CD8-positive, alpha-beta T cell (primary cell): ENCODE measurements at regions of chr9 and their contacts with region 1.

Region 1: DNA sequence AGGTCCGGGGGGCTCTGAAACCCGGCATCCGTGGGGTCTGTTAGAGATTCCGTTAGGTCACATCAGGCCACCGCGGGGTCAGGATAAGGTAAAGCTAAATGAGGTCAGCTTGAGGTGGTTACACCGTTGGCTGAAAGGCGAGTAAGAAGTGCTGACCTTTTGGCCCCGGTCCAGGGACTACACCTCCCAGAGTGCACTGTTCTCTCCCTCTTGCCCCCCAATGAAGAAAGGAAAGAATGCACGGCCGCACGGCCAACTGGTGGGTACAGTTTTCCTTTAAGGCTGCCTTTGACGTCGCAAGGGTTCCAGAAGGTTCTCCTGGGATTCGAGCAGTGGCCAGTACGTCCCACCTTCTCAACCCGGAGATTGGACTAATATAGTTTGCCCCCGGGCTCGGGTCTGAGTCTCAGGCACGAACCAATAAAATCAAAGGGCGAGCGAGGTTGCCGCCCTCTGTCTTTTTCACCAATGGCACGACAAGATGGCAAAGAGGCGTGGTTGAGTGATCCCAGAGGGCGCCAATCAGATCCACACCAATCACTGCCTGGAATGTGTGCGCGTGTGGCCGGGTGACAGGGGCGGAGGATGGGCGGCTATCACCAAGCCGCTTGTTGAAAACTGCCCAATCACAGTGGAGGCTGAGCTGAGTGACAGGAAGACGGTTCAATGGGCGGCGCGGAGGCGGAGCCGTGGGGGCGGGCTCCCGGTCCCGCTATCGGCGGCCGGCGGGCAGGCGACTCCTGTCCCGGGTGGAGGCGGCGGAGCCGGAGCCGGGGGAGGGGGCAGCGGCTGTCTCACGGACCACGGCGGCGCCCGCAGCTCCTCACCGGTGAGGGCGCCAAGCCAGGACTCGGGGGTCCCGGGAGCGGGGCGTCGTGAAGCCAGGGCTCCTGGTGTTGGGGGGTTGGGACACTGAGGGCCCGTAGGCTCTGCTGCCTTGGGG is at the start of gene DNAJB5:
- DNase-seq: peak; percentile 94 to 99 (median 96)
- ATAC-seq: peak; percentile 89
- H3K4me3 ChIP-seq: peak within 1 kb of the TSS; percentile 88 to 95
- H3K4me3 Mint-ChIP-seq: peak within 1 kb of the TSS; percentile 93
- H3K27ac ChIP-seq: peak within 1 kb of the TSS; percentile 42 to 77
- H3K27ac Mint-ChIP-seq: peak within 1 kb of the TSS; percentile 76
- H3K4me1 ChIP-seq: peaks cover 42% of the 10 kb centered on the region
- H3K4me1 Mint-ChIP-seq: peaks cover 46% of the 10 kb centered on the region
- H3K27me3 ChIP-seq: no peaks in the 10 kb centered on the region
- H3K27me3 Mint-ChIP-seq: no peaks in the 10 kb centered on the region
- CTCF ChIP-seq: no peak
- total RNA-seq, gene DNAJB5: 2.1 to 2.2 TPM

Region 2: DNA sequence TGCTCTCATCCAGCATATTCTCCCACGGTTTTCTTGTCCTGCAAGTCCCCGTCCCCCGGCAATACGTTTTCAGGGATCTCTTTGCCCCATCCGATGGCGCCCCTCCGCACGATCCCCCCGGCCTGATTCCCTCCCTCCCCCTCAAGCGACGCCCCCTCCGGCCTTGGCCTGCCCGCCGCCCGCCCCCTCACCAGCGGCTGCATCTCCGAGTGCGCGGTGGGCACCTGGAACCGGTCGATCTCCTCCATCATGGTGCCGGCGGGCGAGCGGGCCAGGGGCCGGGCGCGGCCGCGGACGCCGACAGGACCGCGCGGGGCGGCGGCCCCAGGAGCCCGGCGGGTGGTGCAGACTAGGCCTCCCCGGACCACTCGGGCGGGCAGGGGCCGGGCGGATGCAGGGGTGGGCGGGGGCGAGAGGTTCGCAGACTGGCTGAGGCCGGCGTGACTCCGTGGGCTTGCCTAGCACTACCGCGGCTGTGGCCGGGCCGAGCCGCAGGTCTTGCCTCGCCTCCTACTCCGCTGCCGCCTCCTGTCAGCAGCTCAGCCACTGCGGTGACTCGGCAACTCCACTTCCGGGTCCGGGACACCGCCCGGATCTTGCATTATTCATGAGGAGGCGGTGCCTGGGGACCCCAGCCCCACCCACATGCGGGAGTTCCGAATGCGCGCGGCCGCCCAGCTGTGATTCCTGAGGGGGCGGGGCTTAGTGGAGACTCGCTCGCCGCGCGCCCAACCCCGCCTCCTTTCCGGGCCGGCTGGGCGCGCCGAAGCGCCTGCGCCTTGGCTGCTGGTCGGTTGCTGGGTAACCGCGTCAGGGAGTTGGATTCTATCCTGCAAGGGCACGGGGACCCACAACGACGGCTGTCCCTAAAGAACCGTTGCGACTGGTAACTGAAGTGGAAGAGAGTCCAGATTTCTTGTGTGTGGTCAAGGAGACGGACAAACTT is 531.0 kb before region 1 on chr9 and contains the starts of genes DNAI1 and FAM219A:
- CTCF ChIA-PET with region 1: no interaction called
- POLR2A ChIA-PET with region 1: no interaction called
- intact Hi-C with region 1: loop called in 1 of 2 experiments (anchors 5 kb)
- DNase-seq: peak; percentile 98 to 99 (median 99)
- ATAC-seq: peak; percentile 96
- H3K4me3 ChIP-seq: peak within 1 kb of the TSS; percentile 61 to 67
- H3K4me3 Mint-ChIP-seq: peak within 1 kb of the TSS; percentile 91
- H3K27ac ChIP-seq: peak within 1 kb of the TSS in 1 of 2 experiments; percentile 29
- H3K27ac Mint-ChIP-seq: peak within 1 kb of the TSS; percentile 46
- H3K4me1 ChIP-seq: peaks cover 14% of the 10 kb centered on the region
- H3K4me1 Mint-ChIP-seq: peaks cover 30% of the 10 kb centered on the region
- H3K27me3 ChIP-seq: no peaks in the 10 kb centered on the region
- H3K27me3 Mint-ChIP-seq: no peaks in the 10 kb centered on the region
- CTCF ChIP-seq: no peak
- total RNA-seq, gene DNAI1: not detected
- total RNA-seq, gene FAM219A: 5.5 to 5.9 TPM

Region 3: DNA sequence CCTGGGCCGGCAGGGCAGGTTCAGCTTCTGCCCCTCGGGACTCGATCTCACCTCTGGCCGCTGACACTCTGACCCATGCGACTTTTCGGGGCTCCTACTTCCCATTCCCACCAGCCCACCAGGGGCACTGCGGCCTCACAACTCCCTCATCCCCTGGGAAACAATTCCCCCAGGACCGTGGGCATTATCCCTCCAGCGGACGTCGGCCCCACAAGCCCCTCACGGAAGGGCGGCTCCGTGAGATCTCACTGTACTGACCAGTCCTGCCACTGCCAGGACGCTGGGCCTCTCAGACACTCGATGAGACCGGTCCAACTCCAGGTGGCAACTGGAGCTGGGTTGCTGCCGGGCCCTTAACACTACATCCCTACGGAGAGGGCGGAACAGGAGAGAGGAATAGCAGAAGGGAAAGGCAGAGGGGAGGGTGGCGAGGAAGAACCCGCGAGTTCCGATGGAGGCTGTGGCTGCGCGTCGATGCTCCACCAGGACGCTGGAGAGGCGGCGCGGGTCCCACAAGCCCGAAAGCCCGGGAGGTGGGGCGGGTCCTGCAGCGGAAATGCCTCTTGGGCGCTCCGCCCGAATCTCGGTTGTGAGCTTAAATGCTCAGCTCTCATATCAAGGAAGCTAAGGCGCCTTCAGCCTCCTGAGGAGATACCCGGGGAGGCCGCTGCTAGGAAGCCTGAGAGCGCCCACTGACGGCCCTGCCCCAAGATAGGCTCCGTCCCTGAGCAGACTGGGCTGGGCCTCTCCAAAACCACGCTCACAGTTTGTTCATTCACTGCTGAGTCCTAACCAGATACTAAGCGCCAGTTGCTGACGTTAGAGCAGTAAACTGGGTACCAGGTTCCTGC is 46.8 kb after region 1 on chr9:
- CTCF ChIA-PET with region 1: interaction called, 3 read pairs
- POLR2A ChIA-PET with region 1: no interaction called
- intact Hi-C with region 1: loop called in 1 of 2 experiments (anchors 5 kb)
- DNase-seq: peak in 8 of 9 experiments; percentile 6 to 58 (median 38)
- ATAC-seq: peak; percentile 81
- H3K4me3 ChIP-seq: peak overlapping the region in 1 of 2 experiments; percentile 28
- H3K4me3 Mint-ChIP-seq: peak overlapping the region; percentile 50
- H3K27ac ChIP-seq: no peak overlapping the region
- H3K27ac Mint-ChIP-seq: no peak overlapping the region
- H3K4me1 ChIP-seq: peaks cover 5% of the 10 kb centered on the region
- H3K4me1 Mint-ChIP-seq: peaks cover 4% of the 10 kb centered on the region
- H3K27me3 ChIP-seq: no peaks in the 10 kb centered on the region
- H3K27me3 Mint-ChIP-seq: no peaks in the 10 kb centered on the region
- CTCF ChIP-seq: no peak

Region 4: GRCh38 chr9:35071814-35072460 is 82.7 kb after region 1 on chr9:
- CTCF ChIA-PET with region 1: no interaction called
- POLR2A ChIA-PET with region 1: interaction called, 5 read pairs
- intact Hi-C with region 1: loop called (anchors 1 kb)
- DNase-seq: peak; percentile 40 to 87 (median 73)
- ATAC-seq: peak; percentile 49
- H3K4me3 ChIP-seq: peak overlapping the region; percentile 82 to 93
- H3K4me3 Mint-ChIP-seq: peak overlapping the region; percentile 93
- H3K27ac ChIP-seq: peak overlapping the region; percentile 91 to 94
- H3K27ac Mint-ChIP-seq: peak overlapping the region; percentile 97
- H3K4me1 ChIP-seq: peaks cover 49% of the 10 kb centered on the region
- H3K4me1 Mint-ChIP-seq: peaks cover 49% of the 10 kb centered on the region
- H3K27me3 ChIP-seq: no peaks in the 10 kb centered on the region
- H3K27me3 Mint-ChIP-seq: no peaks in the 10 kb centered on the region
- CTCF ChIP-seq: peak; percentile 43

Region 5: GRCh38 chr9:35096035-35096849 is 107.0 kb after region 1 on chr9 and contains the start of gene PIGO:
- CTCF ChIA-PET with region 1: interaction called, 5 read pairs
- POLR2A ChIA-PET with region 1: no interaction called
- intact Hi-C with region 1: loop called in 1 of 2 experiments (anchors 2 kb)
- DNase-seq: peak; percentile 78 to 94 (median 89)
- ATAC-seq: peak; percentile 90
- H3K4me3 ChIP-seq: peak within 1 kb of the TSS; percentile 95 to 99
- H3K4me3 Mint-ChIP-seq: peak within 1 kb of the TSS; percentile 88
- H3K27ac ChIP-seq: peak within 1 kb of the TSS; percentile 95 to 100
- H3K27ac Mint-ChIP-seq: peak within 1 kb of the TSS; percentile 95
- H3K4me1 ChIP-seq: peaks cover 24% of the 10 kb centered on the region
- H3K4me1 Mint-ChIP-seq: peaks cover 32% of the 10 kb centered on the region
- H3K27me3 ChIP-seq: no peaks in the 10 kb centered on the region
- H3K27me3 Mint-ChIP-seq: no peaks in the 10 kb centered on the region
- CTCF ChIP-seq: peak; percentile 75
- total RNA-seq, gene PIGO: 15.1 to 16.4 TPM

Region 6: DNA sequence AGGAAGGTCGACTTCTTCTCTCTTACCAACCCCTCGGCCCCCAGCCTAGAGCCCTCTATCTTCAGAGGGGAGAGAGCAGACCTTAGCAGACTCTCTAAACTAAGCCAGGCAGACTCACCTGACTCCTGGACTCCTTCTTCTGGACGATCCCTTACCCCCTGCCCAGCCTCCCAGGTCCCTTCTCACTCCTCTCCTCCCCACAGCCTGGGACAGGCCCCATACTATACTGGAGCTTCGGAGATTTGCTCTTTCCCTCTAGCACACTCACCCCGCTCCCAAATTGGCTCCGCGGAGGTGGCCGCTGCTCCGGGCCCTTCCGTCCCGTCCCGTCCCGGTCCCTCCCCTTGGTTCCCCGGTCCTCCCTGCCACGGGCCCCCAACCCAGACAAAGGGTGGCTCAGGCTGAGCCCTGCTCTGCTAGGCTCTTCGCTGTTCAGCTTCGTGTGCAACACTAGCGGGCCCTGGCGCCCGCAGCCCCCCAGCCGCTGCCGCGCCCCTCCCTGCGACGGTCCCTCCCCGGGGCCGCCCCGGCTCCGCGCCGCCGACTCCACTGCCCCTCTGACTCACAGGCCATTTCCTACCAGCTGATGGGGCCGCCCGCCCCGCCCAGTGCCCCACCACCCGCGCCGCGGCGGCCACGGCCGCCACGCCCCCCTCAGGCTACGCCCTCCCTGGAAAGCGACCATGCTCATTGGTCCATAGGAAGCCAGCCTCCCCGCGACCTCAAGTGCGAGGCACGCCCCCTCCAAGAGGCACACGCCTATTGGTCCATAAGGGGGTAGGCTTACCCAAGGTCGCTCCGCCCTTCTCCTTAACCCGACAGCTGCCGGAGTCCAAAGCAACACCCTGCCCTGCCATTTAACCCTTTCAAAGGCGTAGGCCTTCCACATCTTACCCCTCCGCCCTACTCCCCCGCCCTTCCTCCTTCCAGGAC is 122.0 kb after region 1 on chr9:
- CTCF ChIA-PET with region 1: no interaction called
- POLR2A ChIA-PET with region 1: no interaction called
- intact Hi-C with region 1: loop called (anchors 1 kb)
- DNase-seq: peak; percentile 88 to 98 (median 96)
- ATAC-seq: peak; percentile 78
- H3K4me3 ChIP-seq: peak overlapping the region; percentile 64 to 73
- H3K4me3 Mint-ChIP-seq: peak overlapping the region; percentile 82
- H3K27ac ChIP-seq: peak overlapping the region; percentile 39 to 79
- H3K27ac Mint-ChIP-seq: peak overlapping the region; percentile 85
- H3K4me1 ChIP-seq: peaks cover 45% of the 10 kb centered on the region
- H3K4me1 Mint-ChIP-seq: peaks cover 53% of the 10 kb centered on the region
- H3K27me3 ChIP-seq: no peaks in the 10 kb centered on the region
- H3K27me3 Mint-ChIP-seq: no peaks in the 10 kb centered on the region
- CTCF ChIP-seq: no peak

Region 7: GRCh38 chr9:35193762-35194161 is 204.5 kb after region 1 on chr9:
- CTCF ChIA-PET with region 1: no interaction called
- POLR2A ChIA-PET with region 1: no interaction called
- intact Hi-C with region 1: no loop called
- DNase-seq: no peak
- ATAC-seq: no peak
- H3K4me3 ChIP-seq: no peak overlapping the region
- H3K4me3 Mint-ChIP-seq: no peak overlapping the region
- H3K27ac ChIP-seq: no peak overlapping the region
- H3K27ac Mint-ChIP-seq: no peak overlapping the region
- H3K4me1 ChIP-seq: no peaks in the 10 kb centered on the region
- H3K4me1 Mint-ChIP-seq: no peaks in the 10 kb centered on the region
- H3K27me3 ChIP-seq: no peaks in the 10 kb centered on the region
- H3K27me3 Mint-ChIP-seq: peaks cover 3% of the 10 kb centered on the region
- CTCF ChIP-seq: no peak

Region 8: GRCh38 chr9:35756275-35757225 is 767.3 kb after region 1 on chr9:
- CTCF ChIA-PET with region 1: no interaction called
- POLR2A ChIA-PET with region 1: no interaction called
- intact Hi-C with region 1: loop called in 1 of 2 experiments (anchors 2 kb)
- DNase-seq: peak; percentile 49 to 87 (median 80)
- ATAC-seq: peak; percentile 97
- H3K4me3 ChIP-seq: peak overlapping the region; percentile 75 to 98
- H3K4me3 Mint-ChIP-seq: peak overlapping the region; percentile 91
- H3K27ac ChIP-seq: peak overlapping the region; percentile 72 to 83
- H3K27ac Mint-ChIP-seq: peak overlapping the region; percentile 91
- H3K4me1 ChIP-seq: peaks cover 18% of the 10 kb centered on the region
- H3K4me1 Mint-ChIP-seq: peaks cover 52% of the 10 kb centered on the region
- H3K27me3 ChIP-seq: no peaks in the 10 kb centered on the region
- H3K27me3 Mint-ChIP-seq: no peaks in the 10 kb centered on the region
- CTCF ChIP-seq: peak; percentile 67